Psoas muscle (tissue), 8 donors: ENCODE measurements at regions of chr2 and their contacts with region 1.

Region 1: GRCh38 chr2:173884025-173884802 is 81.0 kb downstream of the SP3 start:
- DNase-seq: peak; percentile 35 to 58
- ATAC-seq: peak in 3 of 4 donors; percentile 37 to 74 (median 57)
- H3K4me3 ChIP-seq: no peak overlapping the region
- H3K27ac ChIP-seq: no peak overlapping the region
- H3K4me1 ChIP-seq: peaks cover 6% of the 10 kb centered on the region
- H3K27me3 ChIP-seq: peaks cover 0 to 2% (median 0%) of the 10 kb centered on the region in 3 donors
- CTCF ChIP-seq: peak; percentile 63

Region 2: GRCh38 chr2:173734797-173735196 is 149.4 kb before region 1 on chr2:
- intact Hi-C with region 1: no loop called
- DNase-seq: no peak
- ATAC-seq: peak in 1 of 4 donors; percentile 62
- H3K4me3 ChIP-seq: no peak overlapping the region
- H3K27ac ChIP-seq: no peak overlapping the region
- H3K4me1 ChIP-seq: no peaks in the 10 kb centered on the region
- H3K27me3 ChIP-seq: no peaks in the 10 kb centered on the region
- CTCF ChIP-seq: no peak

Region 3: DNA sequence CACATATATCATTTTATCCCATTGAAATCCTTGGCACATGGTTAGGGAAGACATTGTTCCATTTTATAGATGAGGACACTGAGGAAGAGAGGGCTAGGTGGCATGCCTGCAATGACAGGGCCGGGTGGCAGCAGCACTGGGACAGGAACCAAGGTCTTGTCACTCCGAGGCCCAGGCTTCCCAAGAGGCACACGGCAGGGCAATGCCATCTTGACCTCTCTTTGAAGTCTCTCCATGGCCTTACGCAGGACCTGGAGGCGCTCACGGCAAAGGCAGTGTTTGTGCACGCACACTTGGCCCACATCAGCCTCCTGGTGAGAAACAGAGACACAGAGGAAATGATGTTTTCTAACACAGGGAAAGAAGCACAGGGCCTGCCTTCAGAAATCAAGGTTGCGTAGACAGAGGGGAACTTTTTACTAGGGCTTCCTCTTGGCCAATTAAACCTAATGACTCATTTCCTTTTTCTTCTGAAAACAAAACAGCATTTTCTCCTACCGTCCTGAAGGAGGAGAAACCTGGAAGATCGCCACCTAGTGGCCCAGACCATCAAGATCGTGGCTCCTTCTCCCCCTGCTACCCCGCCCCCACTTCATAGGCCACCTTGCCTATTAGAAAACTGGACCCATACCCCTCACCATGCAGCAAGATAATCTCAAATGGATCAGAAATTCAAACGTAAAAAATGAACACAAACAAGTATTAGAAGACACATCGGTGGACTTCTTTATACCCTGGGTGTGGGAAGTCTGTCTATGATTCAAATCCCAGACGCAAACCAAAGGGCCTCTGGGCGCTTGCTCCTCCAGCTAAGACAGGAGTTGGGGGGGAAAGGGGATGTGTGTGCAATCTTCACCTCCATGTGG is 155.6 kb after region 1 on chr2:
- intact Hi-C with region 1: loop called in 1 of 2 experiments (anchors 10 kb)
- DNase-seq: peak; percentile 86 to 92
- ATAC-seq: peak; percentile 76 to 87 (median 80)
- H3K4me3 ChIP-seq: peak overlapping the region; percentile 40
- H3K27ac ChIP-seq: peak overlapping the region; percentile 75
- H3K4me1 ChIP-seq: peaks cover 20% of the 10 kb centered on the region
- H3K27me3 ChIP-seq: no peaks in the 10 kb centered on the region
- CTCF ChIP-seq: peak; percentile 78